Transverse colon (tissue), 4 donors: ENCODE measurements at regions of chr2 and their contacts with region 1.

Region 1: GRCh38 chr2:239401067-239401880 is 454 bp upstream of the HDAC4 start:
- DNase-seq: peak; percentile 100
- H3K4me3 ChIP-seq: peak overlapping the region; percentile 44 to 82 (median 74)
- H3K27ac ChIP-seq: peak overlapping the region; percentile 96 to 98 (median 96)
- H3K4me1 ChIP-seq: peaks cover 0 to 23% (median 15%) of the 10 kb centered on the region in 4 donors
- H3K27me3 ChIP-seq: no peaks in the 10 kb centered on the region
- CTCF ChIP-seq: no peak
- EP300 ChIP-seq: no peak
- POLR2A ChIP-seq: peak; percentile 98

Region 2: GRCh38 chr2:239106314-239106908 is 294.9 kb before region 1 on chr2:
- in situ Hi-C with region 1: no loop called
- intact Hi-C with region 1: loop called (anchors 10 kb)
- DNase-seq: peak; percentile 44
- H3K4me3 ChIP-seq: no peak overlapping the region
- H3K27ac ChIP-seq: no peak overlapping the region
- H3K4me1 ChIP-seq: peaks cover 0 to 6% (median 3%) of the 10 kb centered on the region in 4 donors
- H3K27me3 ChIP-seq: no peaks in the 10 kb centered on the region
- CTCF ChIP-seq: peak in 4 of 5 experiments; percentile 29 to 43 (median 37)
- EP300 ChIP-seq: no peak
- POLR2A ChIP-seq: no peak

Region 3: DNA sequence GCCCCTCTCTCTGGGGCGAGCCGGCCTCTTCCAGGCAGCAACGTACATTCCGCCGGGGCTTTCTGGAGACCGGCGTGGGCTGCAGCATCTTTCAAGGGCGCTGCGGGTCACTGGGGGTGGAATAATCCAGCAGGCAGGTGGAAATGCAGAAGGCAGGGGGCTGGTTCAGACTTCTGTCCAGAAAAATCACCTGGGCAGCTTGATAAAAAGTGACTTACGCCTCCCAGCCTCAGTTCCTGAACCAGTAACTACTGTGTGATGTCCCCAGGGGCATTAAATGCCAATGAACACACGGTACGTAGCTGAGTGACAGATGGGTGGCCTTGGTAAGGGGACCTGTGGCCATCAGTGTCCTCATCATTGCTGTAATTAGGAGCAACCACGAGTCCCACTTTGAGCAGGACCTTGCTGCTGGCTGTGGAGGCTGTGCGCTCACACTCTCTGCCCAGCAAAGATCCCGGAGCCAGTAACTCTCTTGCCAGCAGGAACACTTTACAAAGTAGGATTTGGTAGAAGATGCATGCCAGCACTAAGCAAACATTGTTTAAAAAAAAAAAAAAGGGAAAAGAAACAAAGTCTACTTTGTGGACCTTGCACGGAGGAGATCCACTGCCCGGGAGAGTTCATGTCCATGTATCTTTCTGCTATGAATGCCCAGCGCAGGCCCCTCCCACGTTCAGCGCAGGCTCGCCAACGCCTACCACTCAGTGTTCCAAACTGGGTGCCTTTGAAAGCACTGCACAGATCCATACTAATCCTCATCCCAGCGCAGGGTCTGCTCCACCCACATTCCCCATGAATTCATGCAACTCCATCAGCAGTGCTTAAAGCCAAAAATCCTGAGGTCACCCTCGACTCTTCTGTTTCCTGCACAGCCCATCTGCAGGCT is 177.7 kb before region 1 on chr2:
- in situ Hi-C with region 1: no loop called
- intact Hi-C with region 1: loop called (anchors 10 kb)
- DNase-seq: peak; percentile 69
- H3K4me3 ChIP-seq: peak overlapping the region in 1 of 4 donors; percentile 3
- H3K27ac ChIP-seq: peak overlapping the region; percentile 78 to 88 (median 86)
- H3K4me1 ChIP-seq: peaks cover 36 to 77% (median 68%) of the 10 kb centered on the region in 4 donors
- H3K27me3 ChIP-seq: no peaks in the 10 kb centered on the region
- CTCF ChIP-seq: no peak
- EP300 ChIP-seq: no peak
- POLR2A ChIP-seq: no peak

Region 4: GRCh38 chr2:239349448-239350135 is 51.7 kb before region 1 on chr2:
- in situ Hi-C with region 1: no loop called
- intact Hi-C with region 1: loop called (anchors 5 kb)
- DNase-seq: no peak
- H3K4me3 ChIP-seq: peak overlapping the region in 1 of 4 donors; percentile 13
- H3K27ac ChIP-seq: peak overlapping the region; percentile 82 to 96 (median 92)
- H3K4me1 ChIP-seq: peaks cover 8 to 40% (median 17%) of the 10 kb centered on the region in 4 donors
- H3K27me3 ChIP-seq: no peaks in the 10 kb centered on the region
- CTCF ChIP-seq: no peak
- EP300 ChIP-seq: peak; percentile 21
- POLR2A ChIP-seq: no peak

Region 5: DNA sequence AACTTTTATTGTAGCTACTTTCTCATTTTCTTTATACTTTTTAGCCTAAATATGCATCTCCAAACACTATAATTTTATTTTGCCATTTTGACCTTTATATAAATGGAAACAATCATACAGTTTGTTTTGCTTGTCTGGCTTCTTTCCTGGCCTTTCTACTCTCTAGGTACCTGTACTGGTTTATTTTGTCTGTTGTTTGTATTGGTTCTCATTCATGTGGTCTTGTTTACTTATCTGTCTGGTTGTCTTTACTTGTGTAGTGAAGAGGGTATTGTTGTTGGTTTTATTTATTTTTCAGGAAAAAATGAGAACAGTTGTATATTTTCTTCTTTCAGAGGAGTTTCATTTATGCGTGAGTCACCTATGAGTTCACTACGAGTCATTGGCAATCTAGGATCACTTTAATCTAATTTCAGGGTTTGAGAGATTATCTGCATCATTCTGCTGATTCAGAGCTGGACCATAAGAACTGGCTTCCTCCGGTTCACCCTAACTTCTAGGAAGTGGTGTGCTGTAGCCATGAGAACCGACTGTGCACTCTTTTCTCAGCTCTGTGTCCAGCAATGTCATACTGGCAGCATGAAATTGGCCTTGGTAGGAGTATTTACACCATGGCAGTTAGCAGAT is 32.6 kb after region 1 on chr2:
- in situ Hi-C with region 1: no loop called
- intact Hi-C with region 1: no loop called
- DNase-seq: no peak
- H3K4me3 ChIP-seq: no peak overlapping the region
- H3K27ac ChIP-seq: no peak overlapping the region
- H3K4me1 ChIP-seq: no peaks in the 10 kb centered on the region
- H3K27me3 ChIP-seq: peaks cover 7% of the 10 kb centered on the region
- CTCF ChIP-seq: no peak
- EP300 ChIP-seq: no peak
- POLR2A ChIP-seq: no peak

Region 6: DNA sequence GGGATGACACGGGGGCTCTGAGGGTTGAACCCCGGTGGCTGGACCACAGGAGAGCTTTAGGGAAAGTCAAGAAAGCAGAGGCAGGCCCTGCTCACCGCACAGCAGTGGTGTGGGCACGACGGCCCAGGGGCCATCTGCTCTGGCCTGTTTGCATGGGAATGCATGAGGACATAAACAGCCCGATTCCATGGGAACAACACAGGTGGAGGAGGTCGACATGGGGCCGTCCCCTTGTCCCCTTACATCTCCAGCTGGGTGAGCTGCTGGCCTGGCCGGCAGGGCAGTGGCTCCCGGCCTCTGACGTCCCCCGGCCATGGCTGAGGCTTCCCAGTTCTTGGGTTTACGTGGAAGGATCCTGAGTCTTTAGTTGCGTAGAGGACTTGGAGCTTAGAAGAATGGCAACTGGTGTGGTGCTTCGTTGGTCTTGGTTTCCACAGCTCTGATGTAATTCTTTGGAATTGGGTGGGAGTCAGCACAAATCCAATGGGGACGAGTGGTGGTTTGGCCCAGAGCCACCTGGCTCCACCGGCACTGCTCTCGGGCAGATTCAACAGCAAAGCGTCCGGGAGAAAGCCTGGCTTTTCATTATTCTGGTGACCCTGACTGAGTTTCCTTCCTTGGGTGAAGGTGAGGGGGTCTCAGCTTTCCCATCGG is 97.8 kb after region 1 on chr2:
- in situ Hi-C with region 1: no loop called
- intact Hi-C with region 1: no loop called
- DNase-seq: peak; percentile 34
- H3K4me3 ChIP-seq: no peak overlapping the region
- H3K27ac ChIP-seq: no peak overlapping the region
- H3K4me1 ChIP-seq: peaks cover 0 to 6% (median 0%) of the 10 kb centered on the region in 4 donors
- H3K27me3 ChIP-seq: peaks cover 5% of the 10 kb centered on the region
- CTCF ChIP-seq: no peak
- EP300 ChIP-seq: no peak
- POLR2A ChIP-seq: no peak

Region 7: DNA sequence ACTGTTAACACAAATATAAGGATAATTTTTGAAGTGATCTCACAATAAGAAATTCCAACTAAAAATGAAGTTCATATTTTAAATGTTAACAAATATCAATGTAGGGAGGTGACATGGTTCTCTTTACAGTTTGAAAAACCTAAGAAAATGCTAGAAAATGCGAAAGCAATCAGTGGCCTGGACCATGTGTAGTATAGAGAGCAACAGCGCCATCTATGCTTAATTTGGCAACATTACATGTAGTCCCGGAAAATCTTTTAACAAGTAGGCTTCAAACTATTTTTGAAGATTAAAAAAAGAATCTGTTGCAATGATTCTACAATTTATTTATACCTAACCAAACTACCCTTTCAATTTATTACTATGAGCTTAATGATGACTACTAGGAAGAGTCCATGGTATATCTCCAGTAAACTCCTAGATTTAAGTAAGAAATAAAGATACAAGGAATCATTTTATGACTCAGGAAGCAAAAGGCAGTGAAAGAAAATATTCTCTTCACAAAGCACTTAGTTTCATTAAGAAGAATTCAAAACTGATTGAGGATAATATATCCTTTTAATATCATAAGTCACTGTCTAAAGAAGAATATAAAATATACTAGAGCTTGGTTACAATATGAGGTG is 590.5 kb after region 1 on chr2:
- in situ Hi-C with region 1: loop called in 1 of 4 experiments (anchors 25 kb)
- intact Hi-C with region 1: no loop called
- DNase-seq: no peak
- H3K4me3 ChIP-seq: no peak overlapping the region
- H3K27ac ChIP-seq: peak overlapping the region in 3 of 4 donors; percentile 39 to 48 (median 39)
- H3K4me1 ChIP-seq: peaks cover 0 to 9% (median 0%) of the 10 kb centered on the region in 4 donors
- H3K27me3 ChIP-seq: no peaks in the 10 kb centered on the region
- CTCF ChIP-seq: peak; percentile 76 to 83 (median 81)
- EP300 ChIP-seq: no peak
- POLR2A ChIP-seq: no peak